ENCODE measurements at regions of chr6 and their contacts with region 1.

Region 1: GRCh38 chr6:97925504-97925903 is 642.5 kb upstream of the MMS22L start:
- DNase-seq: no peak
- CTCF ChIP-seq: no peak

Region 2: GRCh38 chr6:97939440-97940168 is 14.1 kb after region 1 on chr6:
- CTCF ChIA-PET with region 1: interaction called, 13 read pairs
- POLR2A ChIA-PET with region 1: no interaction called
- DNase-seq: no peak
- CTCF ChIP-seq: no peak

Region 3: DNA sequence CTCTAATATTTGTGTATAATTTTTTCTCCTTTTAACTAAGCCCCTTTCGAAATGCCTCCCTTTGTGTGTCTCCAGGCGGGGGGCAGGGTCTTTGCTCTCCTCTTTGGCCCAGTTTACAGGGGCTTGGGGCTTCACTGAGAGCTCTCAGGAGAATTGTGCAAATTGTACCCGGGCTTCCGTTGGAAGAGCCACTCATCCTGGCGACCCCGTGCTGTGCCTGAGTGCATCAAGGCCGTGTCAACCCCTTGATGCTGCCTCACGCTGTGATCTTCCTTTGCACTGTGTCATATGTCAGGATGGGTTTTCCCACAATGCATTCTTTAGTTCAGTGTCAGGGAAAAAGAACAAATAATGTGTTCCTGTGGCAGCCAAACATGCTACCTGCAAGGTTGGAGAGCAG is 790.8 kb after region 1 on chr6:
- CTCF ChIA-PET with region 1: no interaction called
- POLR2A ChIA-PET with region 1: no interaction called
- DNase-seq: no peak
- CTCF ChIP-seq: no peak

Measured in GM10248 (cell line).